ENCODE measurements at regions of chr2 and their contacts with region 1.

Region 1: GRCh38 chr2:47735136-47735869 is 47.6 kb upstream of the MSH6 start:
- DNase-seq: no peak
- ATAC-seq: peak; percentile 58
- H3K4me3 Mint-ChIP-seq: no peak overlapping the region
- H3K27ac Mint-ChIP-seq: peak overlapping the region; percentile 25
- H3K4me1 Mint-ChIP-seq: peaks cover 29% of the 10 kb centered on the region
- H3K27me3 Mint-ChIP-seq: no peaks in the 10 kb centered on the region
- CTCF ChIP-seq: no peak

Region 2: DNA sequence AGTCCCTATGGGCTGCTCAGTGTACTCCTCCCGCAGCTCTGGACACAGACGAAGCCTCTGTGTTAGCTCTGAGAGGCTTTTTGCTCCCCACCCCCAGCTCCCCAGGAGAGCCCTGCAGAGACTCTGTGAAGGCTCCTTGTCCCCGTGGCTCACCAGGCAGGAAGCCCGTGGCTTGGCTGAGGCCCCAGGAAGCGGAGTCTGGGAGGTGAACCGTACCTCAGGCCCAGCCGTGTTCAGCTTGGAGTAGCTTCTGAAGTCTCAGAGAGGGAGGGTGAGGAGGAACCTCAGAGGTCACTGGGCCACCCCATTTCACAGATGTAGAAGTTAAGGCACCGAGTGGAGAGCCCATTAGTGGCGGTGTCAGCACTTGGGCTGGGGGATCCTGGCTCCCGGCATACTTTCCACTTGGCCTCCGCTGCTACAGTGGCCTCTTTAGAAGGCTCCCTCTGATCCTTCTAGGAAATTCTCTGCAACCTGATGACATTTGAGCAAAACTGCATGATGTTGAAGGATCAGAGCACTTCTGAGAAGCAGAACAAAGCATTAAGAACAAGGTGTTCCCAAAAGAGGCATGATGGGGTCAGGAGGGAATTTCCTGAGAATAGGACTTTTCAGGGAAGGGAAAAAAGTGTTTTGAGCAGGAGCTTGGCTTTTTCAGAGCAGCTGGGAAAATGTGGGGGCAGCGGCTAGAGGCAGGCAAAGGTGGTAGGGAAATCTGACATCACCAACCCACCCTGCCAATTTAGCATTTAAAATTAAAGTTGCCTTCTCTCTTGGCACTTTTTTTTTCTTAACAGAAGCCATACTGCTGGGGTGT is 898.8 kb before region 1 on chr2:
- CTCF ChIA-PET with region 1: no interaction called
- POLR2A ChIA-PET with region 1: interaction called, 15 read pairs
- intact Hi-C with region 1: no loop called
- DNase-seq: no peak
- ATAC-seq: no peak
- H3K4me3 Mint-ChIP-seq: no peak overlapping the region
- H3K27ac Mint-ChIP-seq: no peak overlapping the region
- H3K4me1 Mint-ChIP-seq: peaks cover 1% of the 10 kb centered on the region
- H3K27me3 Mint-ChIP-seq: peaks cover 4% of the 10 kb centered on the region
- CTCF ChIP-seq: no peak

Region 3: DNA sequence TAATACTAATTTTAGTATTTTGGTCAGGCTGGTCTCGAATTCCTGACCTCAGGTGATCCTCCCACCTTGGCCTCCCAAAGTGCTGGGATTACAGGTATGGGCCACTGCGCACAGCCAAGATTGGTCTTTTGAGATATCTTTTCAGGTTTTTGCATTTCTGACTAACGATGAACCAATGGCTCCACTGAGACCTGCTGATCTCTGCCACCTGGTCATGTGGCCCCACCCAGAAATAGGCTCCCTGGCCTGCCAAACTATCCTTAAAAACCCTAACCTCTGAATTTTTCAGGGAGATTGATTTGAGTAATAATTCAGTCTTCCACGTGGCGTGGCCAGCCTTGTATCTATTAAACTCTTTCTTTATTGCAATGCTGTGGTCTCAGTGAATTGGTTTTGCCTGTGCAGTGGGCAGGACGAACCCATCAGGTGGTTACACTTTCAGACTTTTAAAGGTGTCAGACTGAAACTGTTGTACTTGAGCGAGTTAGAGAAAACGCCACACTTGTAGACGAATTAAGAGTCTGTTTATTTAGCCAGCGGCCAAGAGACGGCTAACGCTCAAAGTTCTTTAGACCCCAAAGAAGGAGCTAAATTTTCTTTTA is 38.2 kb before region 1 on chr2:
- CTCF ChIA-PET with region 1: no interaction called
- POLR2A ChIA-PET with region 1: no interaction called
- intact Hi-C with region 1: loop called (anchors 5 kb)
- DNase-seq: no peak
- ATAC-seq: peak; percentile 51
- H3K4me3 Mint-ChIP-seq: peak overlapping the region; percentile 67
- H3K27ac Mint-ChIP-seq: peak overlapping the region; percentile 87
- H3K4me1 Mint-ChIP-seq: peaks cover 67% of the 10 kb centered on the region
- H3K27me3 Mint-ChIP-seq: peaks cover 2% of the 10 kb centered on the region
- CTCF ChIP-seq: no peak

Region 4: DNA sequence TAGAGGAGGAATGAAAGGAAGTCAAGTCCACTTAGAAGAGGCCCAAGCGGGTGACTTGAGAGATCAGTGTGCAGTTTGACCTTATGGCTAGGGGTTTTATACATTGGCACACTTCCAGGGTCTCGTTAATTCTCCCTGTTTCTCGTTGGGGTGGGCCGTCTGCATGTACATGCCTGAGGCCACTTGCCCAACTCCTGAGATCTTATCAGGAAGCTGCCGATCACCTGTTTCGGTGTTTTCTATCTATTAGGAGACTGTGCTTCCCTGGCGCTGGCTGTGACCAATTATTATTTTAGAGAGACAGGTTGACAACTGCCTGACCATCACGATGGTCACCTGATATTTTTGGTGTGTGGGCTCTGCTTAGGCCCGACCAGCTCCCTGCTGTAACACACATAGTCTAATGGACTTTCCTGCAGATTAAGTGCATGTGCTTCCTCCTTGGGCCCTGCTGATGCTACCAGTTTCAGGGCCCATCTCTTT is 16.6 kb after region 1 on chr2:
- CTCF ChIA-PET with region 1: interaction called, 3 read pairs
- POLR2A ChIA-PET with region 1: interaction called, 6 read pairs
- intact Hi-C with region 1: loop called (anchors 2 kb)
- DNase-seq: no peak
- ATAC-seq: no peak
- H3K4me3 Mint-ChIP-seq: no peak overlapping the region
- H3K27ac Mint-ChIP-seq: peak overlapping the region; percentile 81
- H3K4me1 Mint-ChIP-seq: peaks cover 34% of the 10 kb centered on the region
- H3K27me3 Mint-ChIP-seq: no peaks in the 10 kb centered on the region
- CTCF ChIP-seq: no peak

Region 5: DNA sequence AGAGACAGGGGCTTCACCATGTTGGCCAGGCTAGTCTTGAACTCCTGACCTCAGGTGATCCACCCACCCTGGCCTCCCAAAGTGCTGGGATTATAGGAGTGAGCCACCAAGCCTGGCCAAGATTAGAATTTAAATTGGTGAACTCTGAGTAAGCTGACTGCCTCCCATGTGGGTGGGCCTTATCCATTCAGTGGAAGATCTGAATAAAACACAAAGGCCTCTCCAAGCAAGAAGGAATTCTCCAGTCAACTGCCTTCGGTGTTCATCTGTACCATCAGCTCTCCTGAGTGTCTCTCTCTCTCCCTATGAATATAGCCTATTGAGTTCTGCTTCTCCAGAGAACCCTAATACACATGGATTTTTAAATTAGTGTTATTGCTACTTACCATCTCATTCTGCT is 134.6 kb after region 1 on chr2:
- CTCF ChIA-PET with region 1: no interaction called
- POLR2A ChIA-PET with region 1: no interaction called
- intact Hi-C with region 1: no loop called
- DNase-seq: no peak
- ATAC-seq: no peak
- H3K4me3 Mint-ChIP-seq: no peak overlapping the region
- H3K27ac Mint-ChIP-seq: peak overlapping the region; percentile 50
- H3K4me1 Mint-ChIP-seq: peaks cover 75% of the 10 kb centered on the region
- H3K27me3 Mint-ChIP-seq: no peaks in the 10 kb centered on the region
- CTCF ChIP-seq: no peak